CD4-positive, alpha-beta memory T cell (primary cell): ENCODE measurements at regions of chr4 and their contacts with region 1.

Region 1: DNA sequence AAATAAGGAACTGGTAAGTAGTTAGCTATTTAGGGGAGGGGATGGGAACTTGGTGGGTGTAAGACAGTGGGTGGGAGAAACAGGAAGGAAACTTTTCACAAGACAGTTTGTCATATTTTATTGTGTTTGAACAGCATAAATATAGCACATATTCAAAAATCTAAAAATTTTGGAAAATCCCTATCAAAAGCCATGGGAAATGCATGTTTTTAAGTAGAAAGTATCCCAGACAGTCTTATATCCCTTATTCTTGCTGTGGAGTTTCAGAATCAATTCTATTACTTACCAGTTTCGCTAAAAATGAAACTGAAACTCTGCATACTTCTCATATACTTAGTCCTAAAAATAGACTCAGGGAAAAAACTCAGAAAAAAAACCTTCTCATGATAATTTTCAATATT is 22.3 kb upstream of the RASGEF1B start:
- DNase-seq: peak in 2 of 5 donors; percentile 30 to 45
- H3K4me3 ChIP-seq: no peak overlapping the region
- H3K4me3 Mint-ChIP-seq: peak overlapping the region; percentile 73 to 88 (median 80)
- H3K27ac ChIP-seq: peak overlapping the region; percentile 59
- H3K27ac Mint-ChIP-seq: peak overlapping the region; percentile 84 to 96 (median 95)
- H3K4me1 ChIP-seq: peaks cover 41% of the 10 kb centered on the region
- H3K4me1 Mint-ChIP-seq: peaks cover 26 to 49% (median 39%) of the 10 kb centered on the region in 4 donors
- H3K27me3 ChIP-seq: no peaks in the 10 kb centered on the region
- H3K27me3 Mint-ChIP-seq: no peaks in the 10 kb centered on the region

Region 2: GRCh38 chr4:81421346-81422218 is 72.4 kb before region 1 on chr4:
- CTCF ChIA-PET with region 1: no interaction called
- POLR2A ChIA-PET with region 1: no interaction called
- intact Hi-C with region 1: no loop called
- DNase-seq: no peak
- H3K4me3 ChIP-seq: no peak overlapping the region
- H3K4me3 Mint-ChIP-seq: no peak overlapping the region
- H3K27ac ChIP-seq: no peak overlapping the region
- H3K27ac Mint-ChIP-seq: peak overlapping the region in 1 of 7 donors; percentile 37
- H3K4me1 ChIP-seq: no peaks in the 10 kb centered on the region
- H3K4me1 Mint-ChIP-seq: no peaks in the 10 kb centered on the region
- H3K27me3 ChIP-seq: no peaks in the 10 kb centered on the region
- H3K27me3 Mint-ChIP-seq: no peaks in the 10 kb centered on the region

Region 3: GRCh38 chr4:81505004-81505598 is 11.1 kb after region 1 on chr4:
- CTCF ChIA-PET with region 1: no interaction called
- POLR2A ChIA-PET with region 1: interaction called, 11 read pairs
- intact Hi-C with region 1: loop called (anchors 1 kb)
- DNase-seq: peak; percentile 52 to 73 (median 58)
- H3K4me3 ChIP-seq: no peak overlapping the region
- H3K4me3 Mint-ChIP-seq: peak overlapping the region in 7 of 8 donors; percentile 56 to 80 (median 69)
- H3K27ac ChIP-seq: peak overlapping the region; percentile 24
- H3K27ac Mint-ChIP-seq: peak overlapping the region; percentile 78 to 91 (median 89)
- H3K4me1 ChIP-seq: peaks cover 20% of the 10 kb centered on the region
- H3K4me1 Mint-ChIP-seq: peaks cover 15 to 28% (median 16%) of the 10 kb centered on the region in 4 donors
- H3K27me3 ChIP-seq: no peaks in the 10 kb centered on the region
- H3K27me3 Mint-ChIP-seq: no peaks in the 10 kb centered on the region

Region 4: GRCh38 chr4:81562093-81562492 is 68.1 kb after region 1 on chr4:
- CTCF ChIA-PET with region 1: no interaction called
- POLR2A ChIA-PET with region 1: no interaction called
- intact Hi-C with region 1: loop called (anchors 5 kb)
- DNase-seq: peak in 4 of 5 donors; percentile 15 to 37 (median 30)
- H3K4me3 ChIP-seq: no peak overlapping the region
- H3K4me3 Mint-ChIP-seq: peak overlapping the region in 4 of 8 donors; percentile 1 to 76 (median 20)
- H3K27ac ChIP-seq: no peak overlapping the region
- H3K27ac Mint-ChIP-seq: peak overlapping the region; percentile 4 to 90 (median 52)
- H3K4me1 ChIP-seq: peaks cover 12% of the 10 kb centered on the region
- H3K4me1 Mint-ChIP-seq: peaks cover 5 to 9% (median 7%) of the 10 kb centered on the region in 4 donors
- H3K27me3 ChIP-seq: no peaks in the 10 kb centered on the region
- H3K27me3 Mint-ChIP-seq: peaks cover 0 to 1% of the 10 kb centered on the region in 2 donors